Breast epithelium (tissue), 4 donors: ENCODE measurements at regions of chr13 and their contacts with region 1.

Region 1: DNA sequence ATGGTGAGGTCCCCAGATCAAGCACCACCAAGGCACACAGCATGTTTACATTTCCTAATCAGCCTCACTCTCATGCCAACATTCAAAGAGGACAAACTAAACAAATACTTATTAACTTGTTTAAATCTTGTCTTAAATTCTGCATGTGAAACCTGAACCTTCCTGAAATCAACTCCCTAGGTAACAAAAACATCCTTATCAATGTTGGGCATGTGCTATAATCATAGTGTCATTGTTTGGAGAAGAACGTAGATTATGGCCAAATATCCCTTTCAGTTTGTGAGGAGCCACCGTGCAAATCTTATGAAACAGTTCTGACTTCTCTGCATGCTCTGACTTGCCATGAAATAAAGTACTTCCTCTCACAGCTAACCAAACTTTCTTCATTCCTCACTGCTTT is 123.8 kb downstream of the NDFIP2 start:
- DNase-seq: no peak
- H3K4me3 ChIP-seq: no peak overlapping the region
- H3K27ac ChIP-seq: peak overlapping the region in 1 of 2 donors; percentile 23
- H3K4me1 ChIP-seq: no peaks in the 10 kb centered on the region
- H3K27me3 ChIP-seq: no peaks in the 10 kb centered on the region
- CTCF ChIP-seq: no peak
- POLR2A ChIP-seq: no peak

Region 2: GRCh38 chr13:77918391-77919245 is 1686.1 kb before region 1 on chr13 and contains the start of gene EDNRB:
- intact Hi-C with region 1: no loop called
- DNase-seq: no peak
- H3K4me3 ChIP-seq: peak within 1 kb of the TSS; percentile 52 to 72 (median 59)
- H3K27ac ChIP-seq: peak within 1 kb of the TSS; percentile 44 to 71
- H3K4me1 ChIP-seq: no peaks in the 10 kb centered on the region
- H3K27me3 ChIP-seq: peaks cover 0 to 4% of the 10 kb centered on the region in 2 donors
- CTCF ChIP-seq: peak in 1 of 3 donors; percentile 11
- POLR2A ChIP-seq: no peak
- total RNA-seq, gene EDNRB: 22.8 to 116 (median 106) TPM

Region 3: GRCh38 chr13:80303225-80303811 is 698.6 kb after region 1 on chr13:
- intact Hi-C with region 1: loop called (anchors 5 kb)
- DNase-seq: no peak
- H3K4me3 ChIP-seq: no peak overlapping the region
- H3K27ac ChIP-seq: peak overlapping the region in 1 of 2 donors; percentile 16
- H3K4me1 ChIP-seq: no peaks in the 10 kb centered on the region
- H3K27me3 ChIP-seq: no peaks in the 10 kb centered on the region
- CTCF ChIP-seq: no peak
- POLR2A ChIP-seq: no peak